ENCODE measurements at regions of chr14 and their contacts with region 1.

Region 1: GRCh38 chr14:87214558-87214957 is 778.4 kb downstream of the GALC start:
- DNase-seq: no peak
- H3K4me3 Mint-ChIP-seq: no peak overlapping the region
- H3K27ac Mint-ChIP-seq: no peak overlapping the region
- H3K4me1 Mint-ChIP-seq: no peaks in the 10 kb centered on the region
- H3K27me3 Mint-ChIP-seq: no peaks in the 10 kb centered on the region
- CTCF ChIP-seq: no peak

Region 2: DNA sequence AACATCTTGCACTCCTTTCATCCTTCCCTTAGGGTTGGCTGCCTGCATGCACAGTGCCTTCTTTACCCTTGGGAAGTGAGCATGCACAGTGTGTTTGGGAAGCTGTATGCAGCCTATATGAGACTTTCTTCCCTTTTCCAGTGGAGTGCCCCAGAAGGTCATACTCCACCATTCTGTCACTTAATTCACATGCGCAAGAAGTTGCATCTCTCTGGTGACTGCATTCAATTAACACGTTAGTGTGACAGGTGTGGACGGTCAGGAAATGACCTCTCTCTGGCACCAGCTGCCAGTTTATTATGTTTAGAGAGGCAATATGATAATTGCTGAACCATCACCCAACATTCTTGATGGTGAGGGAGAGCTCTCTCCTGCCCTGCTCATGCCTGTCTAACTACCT is 914.6 kb before region 1 on chr14:
- CTCF ChIA-PET with region 1: no interaction called
- intact Hi-C with region 1: no loop called
- DNase-seq: no peak
- H3K4me3 Mint-ChIP-seq: no peak overlapping the region
- H3K27ac Mint-ChIP-seq: no peak overlapping the region
- H3K4me1 Mint-ChIP-seq: no peaks in the 10 kb centered on the region
- H3K27me3 Mint-ChIP-seq: no peaks in the 10 kb centered on the region
- CTCF ChIP-seq: no peak

Region 3: DNA sequence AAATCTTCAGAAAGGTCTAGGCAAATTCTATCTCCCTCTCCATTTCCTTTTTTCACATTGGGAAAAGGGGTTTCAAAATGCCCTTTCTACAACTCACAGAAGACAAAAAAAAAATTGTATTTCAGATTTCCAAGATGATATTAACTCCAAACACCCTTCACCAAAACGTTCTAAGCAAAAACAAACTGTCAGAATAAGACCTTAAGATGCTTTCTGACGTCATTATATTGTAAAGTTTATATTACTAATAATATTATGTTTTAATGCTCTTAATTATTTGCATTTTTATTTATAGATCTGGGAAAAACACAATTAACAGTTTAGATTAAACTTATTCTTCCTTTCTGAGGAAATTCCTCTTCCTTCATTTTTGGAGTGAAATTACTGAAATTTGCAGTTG is 154.2 kb after region 1 on chr14:
- CTCF ChIA-PET with region 1: interaction called, 13 read pairs
- intact Hi-C with region 1: no loop called
- DNase-seq: no peak
- H3K4me3 Mint-ChIP-seq: no peak overlapping the region
- H3K27ac Mint-ChIP-seq: no peak overlapping the region
- H3K4me1 Mint-ChIP-seq: no peaks in the 10 kb centered on the region
- H3K27me3 Mint-ChIP-seq: no peaks in the 10 kb centered on the region
- CTCF ChIP-seq: no peak